ENCODE measurements at regions of chr1 and their contacts with region 1.

Region 1: GRCh38 chr1:204806943-204807687 is 63.5 kb upstream of the NFASC start:
- DNase-seq: peak; percentile 79 to 88 (median 85)
- H3K4me3 ChIP-seq: peak overlapping the region in 1 of 2 donors; percentile 47
- H3K4me3 Mint-ChIP-seq: peak overlapping the region; percentile 82 to 95 (median 92)
- H3K27ac ChIP-seq: no peak overlapping the region
- H3K27ac Mint-ChIP-seq: peak overlapping the region; percentile 1 to 93 (median 62)
- H3K4me1 ChIP-seq: no peaks in the 10 kb centered on the region
- H3K4me1 Mint-ChIP-seq: peaks cover 0 to 6% (median 4%) of the 10 kb centered on the region in 4 donors
- H3K27me3 ChIP-seq: no peaks in the 10 kb centered on the region
- H3K27me3 Mint-ChIP-seq: no peaks in the 10 kb centered on the region

Region 2: GRCh38 chr1:204431310-204432165 is 375.6 kb before region 1 on chr1:
- CTCF ChIA-PET with region 1: interaction called, 21 read pairs
- POLR2A ChIA-PET with region 1: no interaction called
- intact Hi-C with region 1: loop called (anchors 1 kb)
- DNase-seq: peak; percentile 68 to 75 (median 71)
- H3K4me3 ChIP-seq: no peak overlapping the region
- H3K4me3 Mint-ChIP-seq: no peak overlapping the region
- H3K27ac ChIP-seq: no peak overlapping the region
- H3K27ac Mint-ChIP-seq: peak overlapping the region in 6 of 7 donors; percentile 8 to 78 (median 71)
- H3K4me1 ChIP-seq: no peaks in the 10 kb centered on the region
- H3K4me1 Mint-ChIP-seq: peaks cover 0 to 9% (median 6%) of the 10 kb centered on the region in 4 donors
- H3K27me3 ChIP-seq: no peaks in the 10 kb centered on the region
- H3K27me3 Mint-ChIP-seq: no peaks in the 10 kb centered on the region

Region 3: GRCh38 chr1:204578867-204579664 is 228.0 kb before region 1 on chr1:
- CTCF ChIA-PET with region 1: interaction called, 18 read pairs
- POLR2A ChIA-PET with region 1: no interaction called
- intact Hi-C with region 1: no loop called
- DNase-seq: peak in 2 of 5 donors; percentile 14 to 19
- H3K4me3 ChIP-seq: peak overlapping the region; percentile 35 to 77
- H3K4me3 Mint-ChIP-seq: peak overlapping the region; percentile 79 to 94 (median 87)
- H3K27ac ChIP-seq: peak overlapping the region; percentile 50
- H3K27ac Mint-ChIP-seq: peak overlapping the region; percentile 86 to 92 (median 92)
- H3K4me1 ChIP-seq: peaks cover 29% of the 10 kb centered on the region
- H3K4me1 Mint-ChIP-seq: peaks cover 17 to 37% (median 22%) of the 10 kb centered on the region in 4 donors
- H3K27me3 ChIP-seq: no peaks in the 10 kb centered on the region
- H3K27me3 Mint-ChIP-seq: no peaks in the 10 kb centered on the region

Region 4: DNA sequence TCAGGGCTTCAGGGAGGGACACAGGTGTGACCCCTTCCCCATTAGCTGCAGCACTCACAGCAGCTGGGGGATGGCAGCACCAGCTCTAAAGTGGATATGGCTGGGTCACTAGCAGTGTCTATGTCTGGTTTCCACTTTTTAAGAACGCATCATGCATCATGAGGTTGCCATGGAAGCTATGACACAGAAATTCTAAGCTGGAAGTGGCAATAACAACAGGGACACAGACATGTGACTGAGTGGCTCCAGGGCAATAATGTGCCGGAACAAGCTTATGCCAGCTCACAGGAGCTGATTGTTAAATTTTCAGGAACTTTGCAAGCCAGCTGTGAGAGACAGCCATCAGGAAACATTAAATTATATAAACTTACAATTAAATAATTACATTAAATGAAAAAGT is 12.4 kb after region 1 on chr1:
- CTCF ChIA-PET with region 1: interaction called, 105 read pairs
- POLR2A ChIA-PET with region 1: no interaction called
- intact Hi-C with region 1: no loop called
- DNase-seq: no peak
- H3K4me3 ChIP-seq: no peak overlapping the region
- H3K4me3 Mint-ChIP-seq: no peak overlapping the region
- H3K27ac ChIP-seq: no peak overlapping the region
- H3K27ac Mint-ChIP-seq: no peak overlapping the region
- H3K4me1 ChIP-seq: no peaks in the 10 kb centered on the region
- H3K4me1 Mint-ChIP-seq: no peaks in the 10 kb centered on the region
- H3K27me3 ChIP-seq: no peaks in the 10 kb centered on the region
- H3K27me3 Mint-ChIP-seq: peaks cover 13 to 26% of the 10 kb centered on the region in 2 donors

Region 5: GRCh38 chr1:204959374-204959773 is 152.3 kb after region 1 on chr1:
- CTCF ChIA-PET with region 1: no interaction called
- POLR2A ChIA-PET with region 1: no interaction called
- intact Hi-C with region 1: no loop called
- DNase-seq: no peak
- H3K4me3 ChIP-seq: no peak overlapping the region
- H3K4me3 Mint-ChIP-seq: no peak overlapping the region
- H3K27ac ChIP-seq: no peak overlapping the region
- H3K27ac Mint-ChIP-seq: no peak overlapping the region
- H3K4me1 ChIP-seq: no peaks in the 10 kb centered on the region
- H3K4me1 Mint-ChIP-seq: no peaks in the 10 kb centered on the region
- H3K27me3 ChIP-seq: no peaks in the 10 kb centered on the region
- H3K27me3 Mint-ChIP-seq: peaks cover 19 to 39% of the 10 kb centered on the region in 2 donors

Region 6: GRCh38 chr1:205440476-205441317 is 633.6 kb after region 1 on chr1:
- CTCF ChIA-PET with region 1: no interaction called
- POLR2A ChIA-PET with region 1: no interaction called
- intact Hi-C with region 1: no loop called
- DNase-seq: peak; percentile 49 to 81 (median 60)
- H3K4me3 ChIP-seq: peak overlapping the region; percentile 20 to 64
- H3K4me3 Mint-ChIP-seq: peak overlapping the region; percentile 76 to 93 (median 88)
- H3K27ac ChIP-seq: peak overlapping the region; percentile 65
- H3K27ac Mint-ChIP-seq: peak overlapping the region; percentile 78 to 94 (median 91)
- H3K4me1 ChIP-seq: peaks cover 28% of the 10 kb centered on the region
- H3K4me1 Mint-ChIP-seq: peaks cover 23 to 34% (median 26%) of the 10 kb centered on the region in 4 donors
- H3K27me3 ChIP-seq: no peaks in the 10 kb centered on the region
- H3K27me3 Mint-ChIP-seq: peaks cover 0 to 4% of the 10 kb centered on the region in 2 donors

Measured in CD4-positive, alpha-beta memory T cell (primary cell).